Prostate gland (tissue), 2 donors: ENCODE measurements at regions of chr1 and their contacts with region 1.

Region 1: GRCh38 chr1:32714277-32714676 is 11.7 kb upstream of the SYNC start:
- DNase-seq: no peak
- H3K4me3 ChIP-seq: no peak overlapping the region
- H3K27ac ChIP-seq: no peak overlapping the region
- H3K4me1 ChIP-seq: peaks cover 12% of the 10 kb centered on the region
- H3K27me3 ChIP-seq: no peaks in the 10 kb centered on the region
- CTCF ChIP-seq: no peak
- POLR2A ChIP-seq: no peak

Region 2: DNA sequence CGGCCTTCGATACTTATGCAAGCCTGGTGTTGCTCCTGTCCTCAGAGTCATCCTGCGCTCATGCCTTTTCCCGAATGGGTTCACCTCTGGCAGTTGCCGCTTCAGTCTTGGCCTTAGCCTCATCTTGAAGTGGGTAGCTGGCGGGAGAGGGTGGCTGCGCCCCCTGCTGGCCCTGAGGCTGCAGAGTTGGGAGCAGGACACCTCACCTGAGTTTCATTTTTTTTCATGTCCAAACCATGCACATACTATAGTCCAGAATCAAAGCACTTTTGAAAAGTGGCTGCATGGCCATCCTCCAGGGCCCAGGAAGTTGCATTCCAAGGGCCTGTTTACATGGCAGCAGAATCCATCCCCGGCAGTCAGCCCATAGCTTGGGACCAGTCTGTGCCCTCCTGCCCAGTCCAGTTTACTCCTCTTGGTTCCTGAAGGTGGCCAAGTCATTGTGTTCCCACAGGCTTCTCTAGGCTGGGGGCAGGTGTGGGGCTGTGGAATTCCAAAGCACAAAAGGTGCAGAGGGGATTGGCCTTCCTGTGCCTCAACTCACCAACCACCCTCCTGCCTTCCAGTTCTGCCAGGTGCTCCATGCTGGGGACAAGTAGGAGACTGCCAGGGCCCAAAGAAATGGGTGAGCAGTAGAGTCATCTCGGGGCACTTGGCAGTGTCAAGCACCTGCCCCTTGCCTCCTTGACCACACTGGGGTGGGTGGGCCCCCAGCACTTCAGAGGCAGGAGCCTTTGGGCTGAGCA is 58.9 kb after region 1 on chr1:
- intact Hi-C with region 1: loop called (anchors 2 kb)
- DNase-seq: peak; percentile 88
- H3K4me3 ChIP-seq: no peak overlapping the region
- H3K27ac ChIP-seq: peak overlapping the region; percentile 26 to 44
- H3K4me1 ChIP-seq: no peaks in the 10 kb centered on the region
- H3K27me3 ChIP-seq: no peaks in the 10 kb centered on the region
- CTCF ChIP-seq: peak; percentile 70 to 97 (median 96)
- POLR2A ChIP-seq: no peak

Region 3: GRCh38 chr1:32870615-32871363 is 156.5 kb after region 1 on chr1 and contains the start of gene FNDC5:
- intact Hi-C with region 1: loop called (anchors 5 kb)
- DNase-seq: no peak
- H3K4me3 ChIP-seq: peak within 1 kb of the TSS; percentile 27 to 34
- H3K27ac ChIP-seq: no peak within 1 kb of the TSS
- H3K4me1 ChIP-seq: peaks cover 4% of the 10 kb centered on the region
- H3K27me3 ChIP-seq: no peaks in the 10 kb centered on the region
- CTCF ChIP-seq: no peak
- POLR2A ChIP-seq: no peak
- total RNA-seq, gene FNDC5: 1.5 to 19.1 TPM